HCT116 (cell line): ENCODE measurements at regions of chr17 and their contacts with region 1.

Region 1: GRCh38 chr17:20121359-20122253 is 112.4 kb downstream of the SPECC1 start:
- DNase-seq: peak; percentile 34
- ATAC-seq: peak; percentile 85
- H3K4me3 ChIP-seq: no peak overlapping the region
- H3K27ac ChIP-seq: no peak overlapping the region
- H3K4me1 ChIP-seq: peaks cover 5% of the 10 kb centered on the region in 2 experiments; a peak in 2 of 4 replicates
- H3K27me3 ChIP-seq: no peaks in the 10 kb centered on the region
- CTCF ChIP-seq: peak; percentile 88 to 95 (median 93)
- POLR2A ChIP-seq: no peak
- RAD21 ChIP-seq: peak; percentile 88

Region 2: DNA sequence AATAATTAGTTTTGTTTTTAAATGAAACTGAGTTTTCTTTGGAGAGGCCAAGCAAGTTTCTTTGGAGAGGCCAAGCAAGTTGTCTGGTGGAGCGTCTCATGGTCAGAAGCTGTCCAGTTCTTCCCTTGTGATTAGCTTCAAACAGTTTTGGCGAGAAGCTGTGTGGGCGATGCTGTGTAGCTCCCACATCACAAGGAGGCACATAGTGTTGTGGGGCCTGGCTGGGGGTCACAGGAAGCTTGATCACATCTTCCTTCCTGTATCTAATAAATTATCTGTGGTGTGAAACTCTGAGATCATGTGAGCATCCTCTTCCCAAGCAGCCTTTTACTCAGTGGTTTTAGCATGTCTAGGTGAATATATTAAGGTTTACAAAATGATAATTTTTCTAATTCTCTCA is 78.6 kb before region 1 on chr17:
- CTCF ChIA-PET with region 1: no interaction called
- POLR2A ChIA-PET with region 1: no interaction called
- RAD21 ChIA-PET with region 1: no interaction called
- intact Hi-C with region 1: no loop called
- DNase-seq: no peak
- ATAC-seq: no peak
- H3K4me3 ChIP-seq: no peak overlapping the region
- H3K27ac ChIP-seq: no peak overlapping the region
- H3K4me1 ChIP-seq: no peaks in the 10 kb centered on the region
- H3K27me3 ChIP-seq: no peaks in the 10 kb centered on the region
- CTCF ChIP-seq: no peak
- POLR2A ChIP-seq: no peak
- RAD21 ChIP-seq: no peak

Region 3: DNA sequence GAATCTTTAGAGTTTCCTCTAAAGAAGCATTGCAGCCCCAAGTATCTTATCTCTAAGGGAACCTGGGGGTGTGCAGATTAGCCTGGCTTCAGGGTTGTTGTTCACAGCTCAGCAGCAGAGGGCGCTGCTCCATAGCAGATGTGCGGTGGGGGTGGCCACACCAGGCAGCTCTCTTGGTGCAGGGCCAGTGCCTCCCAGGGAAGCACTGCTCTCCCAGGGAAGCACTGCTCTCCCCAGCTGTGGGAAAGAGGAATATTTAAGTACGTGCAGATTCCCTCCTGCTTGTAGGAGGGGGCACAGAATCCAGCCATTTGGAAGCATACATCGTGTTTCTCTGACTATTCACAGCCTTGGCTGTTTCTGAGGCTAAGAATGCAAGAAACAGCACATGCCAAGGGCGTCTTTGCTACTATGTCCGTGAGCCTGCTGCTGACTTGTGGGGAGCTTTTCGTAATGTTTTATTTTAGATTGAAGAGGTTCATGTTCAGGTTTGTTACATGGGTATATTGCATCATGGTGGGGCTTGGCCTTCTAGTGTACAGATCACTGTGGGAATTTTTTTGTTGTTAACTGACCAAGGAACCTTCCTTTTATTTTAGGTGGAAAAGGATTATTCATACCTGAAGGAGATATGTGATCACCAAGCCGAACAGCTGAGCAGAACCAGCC is 105.3 kb after region 1 on chr17:
- CTCF ChIA-PET with region 1: interaction called, 6 read pairs
- POLR2A ChIA-PET with region 1: no interaction called
- RAD21 ChIA-PET with region 1: no interaction called
- intact Hi-C with region 1: loop called (anchors 1 kb)
- DNase-seq: peak; percentile 34
- ATAC-seq: peak; percentile 100
- H3K4me3 ChIP-seq: no peak overlapping the region
- H3K27ac ChIP-seq: no peak overlapping the region
- H3K4me1 ChIP-seq: 0 out of 4 replicates have a peak, but pooled peaks cover 0 to 3% of the 10 kb centered on the region in 2 experiments
- H3K27me3 ChIP-seq: no peaks in the 10 kb centered on the region
- CTCF ChIP-seq: peak; percentile 86 to 95 (median 94)
- POLR2A ChIP-seq: no peak
- RAD21 ChIP-seq: peak; percentile 83

Region 4: GRCh38 chr17:20315821-20316220 is 194.2 kb after region 1 on chr17:
- CTCF ChIA-PET with region 1: interaction called, 3 read pairs
- POLR2A ChIA-PET with region 1: no interaction called
- RAD21 ChIA-PET with region 1: no interaction called
- intact Hi-C with region 1: loop called (anchors 2 kb)
- DNase-seq: no peak
- ATAC-seq: no peak
- H3K4me3 ChIP-seq: no peak overlapping the region
- H3K27ac ChIP-seq: no peak overlapping the region
- H3K4me1 ChIP-seq: no peaks in the 10 kb centered on the region
- H3K27me3 ChIP-seq: no peaks in the 10 kb centered on the region
- CTCF ChIP-seq: no peak
- POLR2A ChIP-seq: no peak
- RAD21 ChIP-seq: no peak